ENCODE measurements at regions of chr19 and their contacts with region 1.

Region 1: GRCh38 chr19:11374433-11375142 is at the start of gene SWSAP1:
- DNase-seq: peak; percentile 98 to 99
- ATAC-seq: peak; percentile 97 to 98 (median 98)
- H3K4me3 ChIP-seq: peak within 1 kb of the TSS; percentile 76
- H3K27ac ChIP-seq: peak within 1 kb of the TSS; percentile 96
- H3K4me1 ChIP-seq: peaks cover 32% of the 10 kb centered on the region
- H3K27me3 ChIP-seq: no peaks in the 10 kb centered on the region
- CTCF ChIP-seq: no peak
- total RNA-seq, gene SWSAP1: 1.1 to 1.7 (median 1.4) TPM

Region 2: DNA sequence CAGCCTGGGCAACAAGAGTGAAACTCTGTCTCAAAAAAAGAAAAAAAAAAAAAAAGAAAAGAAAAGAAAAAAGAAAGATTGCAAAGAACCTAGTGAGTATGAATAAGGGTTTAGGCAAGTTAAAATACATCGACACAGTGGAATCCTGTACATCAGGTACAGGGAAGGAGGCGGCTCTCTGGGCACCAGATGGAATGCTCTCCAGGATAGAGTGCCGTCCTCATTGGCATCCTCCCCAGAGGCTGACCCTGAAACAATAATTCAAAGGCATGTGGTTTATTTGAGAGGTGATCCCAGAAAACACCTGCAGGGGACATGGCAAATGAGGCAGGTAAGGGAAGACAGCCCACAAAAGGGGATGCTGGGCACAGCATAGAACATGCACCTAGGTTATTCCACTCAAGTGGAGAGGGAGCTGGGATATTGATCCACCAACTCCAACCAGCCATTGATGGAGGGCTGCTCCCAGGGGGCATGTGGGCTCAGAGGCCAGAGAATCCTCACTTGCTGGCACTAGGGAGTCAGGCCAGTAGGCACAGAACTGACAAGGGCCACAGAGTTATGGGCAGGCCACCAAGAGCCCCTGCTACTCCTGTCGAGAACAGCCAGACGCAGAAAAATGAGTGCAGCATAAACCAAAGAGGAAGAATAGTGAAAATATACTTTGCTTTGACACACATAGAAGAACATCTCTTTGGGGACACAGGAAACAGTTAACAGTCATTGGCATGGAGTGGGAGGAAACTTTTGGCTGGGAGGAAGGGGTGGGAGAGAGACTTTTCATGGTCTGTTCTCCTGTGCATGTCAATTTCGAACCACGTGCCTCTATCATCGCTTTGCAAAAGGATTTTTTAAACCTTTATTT is 74.4 kb before region 1 on chr19:
- intact Hi-C with region 1: no loop called
- DNase-seq: no peak
- ATAC-seq: no peak
- H3K4me3 ChIP-seq: no peak overlapping the region
- H3K27ac ChIP-seq: no peak overlapping the region
- H3K4me1 ChIP-seq: no peaks in the 10 kb centered on the region
- H3K27me3 ChIP-seq: peaks cover 0 to 6% (median 3%) of the 10 kb centered on the region in 3 donors
- CTCF ChIP-seq: no peak

Region 3: DNA sequence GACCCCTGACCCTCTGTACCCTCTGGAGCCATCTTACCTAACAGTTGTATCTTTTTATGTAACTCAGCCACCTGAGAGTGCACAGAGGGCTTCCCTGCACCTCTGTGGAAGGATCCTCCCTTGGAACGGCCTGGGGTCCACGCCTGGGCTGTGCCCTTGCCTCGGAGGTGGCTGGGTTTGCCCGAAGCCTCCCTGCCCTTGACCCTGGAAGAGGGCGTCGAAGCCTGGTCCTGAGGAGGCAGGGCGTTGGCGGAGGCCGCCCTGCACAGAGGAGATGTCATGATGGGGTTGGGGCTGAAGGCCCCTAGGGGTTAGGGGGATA is 60.1 kb after region 1 on chr19:
- intact Hi-C with region 1: loop called in 1 of 2 experiments (anchors 5 kb)
- DNase-seq: no peak
- ATAC-seq: no peak
- H3K4me3 ChIP-seq: peak overlapping the region; percentile 94
- H3K27ac ChIP-seq: peak overlapping the region; percentile 79
- H3K4me1 ChIP-seq: peaks cover 9% of the 10 kb centered on the region
- H3K27me3 ChIP-seq: no peaks in the 10 kb centered on the region
- CTCF ChIP-seq: no peak

Region 4: GRCh38 chr19:11505032-11505503 is 130.5 kb after region 1 on chr19:
- intact Hi-C with region 1: loop called in 1 of 2 experiments (anchors 10 kb)
- DNase-seq: peak; percentile 98 to 99
- ATAC-seq: peak; percentile 92 to 95 (median 94)
- H3K4me3 ChIP-seq: peak overlapping the region; percentile 84
- H3K27ac ChIP-seq: peak overlapping the region; percentile 93
- H3K4me1 ChIP-seq: peaks cover 4% of the 10 kb centered on the region
- H3K27me3 ChIP-seq: no peaks in the 10 kb centered on the region
- CTCF ChIP-seq: no peak